AG04449 (cell line): ENCODE measurements at regions of chr13 and their contacts with region 1.

Region 1: DNA sequence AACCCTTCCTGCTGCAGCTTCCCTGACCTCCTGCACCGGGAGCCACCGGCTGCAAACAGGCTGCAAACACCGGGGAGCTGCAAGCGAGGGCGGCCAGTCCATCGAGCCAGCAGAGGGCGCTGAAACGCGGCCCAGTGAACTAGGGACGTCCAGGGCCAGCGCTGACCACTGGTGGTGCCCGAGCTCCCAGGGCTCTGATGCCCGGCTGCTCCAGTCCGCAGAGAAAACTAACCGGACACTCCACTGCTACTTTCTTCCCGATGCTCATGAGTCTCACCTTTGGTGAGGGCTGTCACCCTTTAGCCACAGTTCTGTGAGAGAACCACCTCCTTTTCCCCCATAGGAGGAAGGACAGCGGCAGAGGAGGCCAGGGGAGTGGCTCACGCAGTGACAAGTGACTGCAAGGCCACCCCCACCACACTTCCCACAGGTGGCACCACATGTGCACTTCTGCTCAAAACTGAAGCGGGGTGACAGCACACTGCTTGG is 82.8 kb upstream of the MTIF3 start:
- DNase-seq: no peak
- H3K4me3 ChIP-seq: peak overlapping the region; percentile 20
- CTCF ChIP-seq: peak; percentile 99

Region 2: GRCh38 chr13:27182844-27183497 is 350.2 kb before region 1 on chr13:
- CTCF ChIA-PET with region 1: no interaction called
- POLR2A ChIA-PET with region 1: no interaction called
- DNase-seq: no peak
- H3K4me3 ChIP-seq: no peak overlapping the region
- CTCF ChIP-seq: no peak

Region 3: DNA sequence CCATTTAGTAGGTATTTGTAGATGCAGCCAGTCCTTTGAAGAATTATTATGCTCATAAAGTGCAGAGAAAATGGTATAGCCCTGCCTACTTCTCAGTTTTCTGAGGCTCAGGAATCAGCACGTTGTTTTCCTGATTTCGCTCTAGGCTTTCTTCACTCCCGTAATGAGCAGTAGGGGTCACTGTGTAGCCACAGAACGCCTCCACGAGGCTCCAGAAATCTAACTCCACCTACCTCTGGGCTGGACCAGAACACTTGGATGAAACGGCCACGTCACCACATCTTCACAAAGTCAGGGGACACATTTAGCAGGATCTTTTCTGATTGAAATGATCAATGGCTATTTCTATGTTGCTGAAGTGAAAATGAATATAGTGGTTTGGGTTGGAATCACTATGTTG is 158.5 kb before region 1 on chr13:
- CTCF ChIA-PET with region 1: interaction called, 13 read pairs
- POLR2A ChIA-PET with region 1: no interaction called
- DNase-seq: peak; percentile 40
- H3K4me3 ChIP-seq: no peak overlapping the region
- CTCF ChIP-seq: peak; percentile 76

Region 4: GRCh38 chr13:27516103-27516502 is 17.1 kb before region 1 on chr13:
- CTCF ChIA-PET with region 1: interaction called, 18 read pairs
- POLR2A ChIA-PET with region 1: no interaction called
- DNase-seq: no peak
- H3K4me3 ChIP-seq: no peak overlapping the region
- CTCF ChIP-seq: no peak

Region 5: DNA sequence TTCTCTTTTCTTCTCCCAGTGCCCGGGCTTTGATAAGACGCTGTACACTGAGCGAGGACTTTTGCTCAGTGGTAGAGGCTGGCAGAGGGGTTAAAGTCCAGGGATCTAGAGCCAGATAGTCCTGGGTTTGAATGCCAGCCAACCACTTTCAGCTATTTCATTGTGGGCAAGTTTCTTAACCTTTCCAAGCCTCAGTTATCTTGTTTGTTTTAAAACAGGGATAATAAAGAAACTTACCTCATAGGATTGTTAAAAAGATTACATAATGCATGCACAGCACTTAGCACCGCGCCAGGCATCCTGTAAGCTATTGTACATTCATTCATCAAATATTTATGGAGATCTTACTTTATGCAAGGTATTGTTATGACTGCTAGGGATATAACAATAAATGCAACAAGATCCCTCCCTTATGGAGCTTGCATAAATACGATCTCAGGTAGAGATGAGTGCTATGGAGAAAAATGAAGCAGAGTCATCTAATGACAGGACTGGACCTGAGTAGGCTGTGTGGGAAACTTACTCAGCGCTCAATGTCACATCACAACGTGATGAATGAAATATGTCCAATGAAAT is 16.3 kb after region 1 on chr13:
- CTCF ChIA-PET with region 1: interaction called, 11 read pairs
- POLR2A ChIA-PET with region 1: no interaction called
- DNase-seq: no peak
- H3K4me3 ChIP-seq: no peak overlapping the region
- CTCF ChIP-seq: no peak

Region 6: DNA sequence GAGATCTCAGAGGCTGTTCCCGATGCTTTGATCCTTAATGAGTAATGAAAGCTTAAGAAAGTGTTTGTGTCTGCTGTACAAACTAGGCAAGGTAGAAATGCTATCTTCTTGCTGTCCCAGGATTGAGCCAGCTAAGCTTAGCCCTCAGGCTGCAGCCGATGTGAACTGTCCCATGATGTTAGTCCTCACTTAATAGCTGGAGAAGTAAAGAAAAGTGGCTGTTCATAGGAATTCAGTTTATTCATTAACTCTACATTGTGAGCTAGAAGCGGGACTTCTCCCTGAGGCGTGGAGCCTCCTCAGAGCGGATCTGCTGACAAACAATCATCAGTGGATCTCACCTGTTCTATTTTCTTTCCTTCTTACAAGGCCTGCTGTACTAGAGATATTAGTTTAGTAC is 249.0 kb after region 1 on chr13:
- CTCF ChIA-PET with region 1: interaction called, 11 read pairs
- POLR2A ChIA-PET with region 1: no interaction called
- DNase-seq: no peak
- H3K4me3 ChIP-seq: no peak overlapping the region
- CTCF ChIP-seq: no peak

Region 7: DNA sequence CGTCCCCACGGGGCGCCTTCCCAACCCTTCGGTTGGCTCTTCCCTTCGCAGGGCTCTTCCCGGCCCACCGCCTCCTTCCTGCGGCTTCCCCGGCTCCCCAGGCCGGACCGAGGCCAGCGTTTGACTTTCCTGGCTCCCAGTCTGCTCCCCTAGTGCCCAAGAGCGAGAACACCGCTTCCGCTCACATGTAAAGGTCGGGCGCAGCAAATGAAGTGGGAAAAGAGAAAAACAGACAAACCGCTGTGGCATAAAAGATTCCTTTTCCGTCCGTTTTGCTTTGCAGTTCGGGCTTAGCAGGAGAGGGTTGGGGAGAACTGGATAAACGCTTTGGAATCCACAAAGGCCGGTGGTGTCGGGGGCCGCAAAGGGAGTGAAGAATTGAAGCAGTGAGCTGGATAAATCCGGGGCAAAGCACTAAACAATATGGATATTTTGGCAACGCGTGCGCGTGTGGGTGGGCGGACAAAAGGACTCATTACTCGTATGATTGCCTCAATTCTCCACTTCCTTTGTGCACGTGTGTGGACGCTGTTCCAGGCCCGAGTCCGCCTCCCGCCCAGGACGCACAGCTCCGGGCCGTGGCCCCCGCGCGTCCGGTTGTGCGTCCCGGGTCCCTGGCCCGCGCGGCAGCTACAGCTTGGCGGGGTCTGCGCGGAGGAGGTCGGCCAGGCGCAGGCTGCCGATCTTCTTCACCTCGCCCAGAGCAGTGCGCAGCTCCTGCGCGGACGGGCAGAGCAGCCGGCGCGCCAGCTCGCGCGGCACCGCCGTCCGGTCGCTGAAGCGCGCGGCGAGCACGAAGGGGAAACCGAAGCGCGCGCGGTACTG is 444.5 kb after region 1 on chr13:
- CTCF ChIA-PET with region 1: interaction called, 25 read pairs
- POLR2A ChIA-PET with region 1: no interaction called
- DNase-seq: no peak
- H3K4me3 ChIP-seq: no peak overlapping the region
- CTCF ChIP-seq: no peak